MCF 10A (cell line): ENCODE measurements at regions of chr14 and their contacts with region 1.

Region 1: DNA sequence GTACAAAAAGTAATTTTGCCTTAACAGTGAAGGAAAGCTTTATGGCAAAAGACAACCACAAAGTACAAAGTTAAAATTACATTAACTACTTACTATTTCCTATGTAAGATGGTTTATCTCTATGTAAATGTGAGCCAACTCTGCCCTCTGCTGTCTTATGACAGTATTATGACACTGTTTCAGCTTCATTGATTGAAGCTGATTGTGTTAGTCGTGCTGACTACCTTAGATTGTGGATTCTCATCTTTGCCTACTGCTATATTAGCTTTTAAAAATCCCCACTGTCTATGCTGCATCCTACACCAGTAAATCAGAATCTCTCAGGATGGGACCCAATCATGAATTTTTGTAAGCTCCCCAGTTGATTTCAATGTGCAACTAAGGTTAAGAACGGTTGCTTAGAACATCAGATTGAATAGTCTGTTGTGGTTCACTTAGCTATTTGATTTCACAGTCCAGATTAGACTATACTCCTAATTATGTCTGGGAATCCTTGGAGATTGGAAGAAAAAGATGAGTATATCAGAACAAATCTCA is 12.2 kb upstream of the SPTB start:
- DNase-seq: peak; percentile 71
- H3K4me3 Mint-ChIP-seq: no peak overlapping the region
- H3K27ac Mint-ChIP-seq: no peak overlapping the region
- H3K4me1 Mint-ChIP-seq: no peaks in the 10 kb centered on the region
- H3K27me3 Mint-ChIP-seq: peaks cover 27% of the 10 kb centered on the region
- CTCF ChIP-seq: peak; percentile 63

Region 2: DNA sequence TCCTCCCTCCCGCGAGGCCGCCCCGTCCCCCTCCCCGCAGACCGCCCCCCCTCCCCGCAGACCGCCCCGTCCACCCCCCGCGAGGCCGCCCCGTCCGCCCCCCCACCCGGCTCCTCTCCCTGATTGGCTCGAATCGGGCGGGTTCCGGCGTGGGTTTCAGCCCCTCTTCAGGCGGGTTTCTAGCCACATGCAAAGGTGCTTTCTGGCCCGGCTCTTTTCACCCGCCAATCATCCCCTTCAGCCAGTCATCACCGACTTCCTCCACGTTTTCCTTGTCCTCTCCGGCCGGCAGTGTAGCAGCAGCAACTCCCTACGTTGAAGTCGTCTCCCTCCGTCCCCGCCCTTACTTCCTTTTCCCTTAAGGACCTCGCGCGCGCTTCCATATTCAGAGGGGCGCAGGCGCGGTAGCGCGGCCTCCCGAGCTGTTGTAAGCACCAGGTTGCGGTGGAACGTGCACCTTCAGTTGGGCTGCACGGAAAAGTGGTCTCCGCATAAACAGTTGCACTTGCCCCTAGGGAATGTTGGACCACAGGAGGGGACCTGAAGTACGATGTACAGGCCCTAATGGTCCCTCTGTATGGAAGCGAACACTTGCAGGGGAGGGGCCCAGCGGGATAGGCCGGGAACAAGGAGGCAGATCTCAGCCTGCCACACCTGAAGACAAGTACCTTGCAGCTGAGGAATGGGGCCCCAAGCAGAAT is 553.1 kb before region 1 on chr14:
- CTCF ChIA-PET with region 1: interaction called, 13 read pairs
- POLR2A ChIA-PET with region 1: no interaction called
- intact Hi-C with region 1: loop called (anchors 5 kb)
- DNase-seq: peak; percentile 99
- H3K4me3 Mint-ChIP-seq: peak overlapping the region; percentile 94
- H3K27ac Mint-ChIP-seq: peak overlapping the region; percentile 83
- H3K4me1 Mint-ChIP-seq: peaks cover 6% of the 10 kb centered on the region
- H3K27me3 Mint-ChIP-seq: no peaks in the 10 kb centered on the region
- CTCF ChIP-seq: no peak

Region 3: GRCh38 chr14:64772393-64772950 is 119.4 kb before region 1 on chr14:
- CTCF ChIA-PET with region 1: interaction called, 18 read pairs
- POLR2A ChIA-PET with region 1: no interaction called
- intact Hi-C with region 1: no loop called
- DNase-seq: no peak
- H3K4me3 Mint-ChIP-seq: no peak overlapping the region
- H3K27ac Mint-ChIP-seq: no peak overlapping the region
- H3K4me1 Mint-ChIP-seq: peaks cover 5% of the 10 kb centered on the region
- H3K27me3 Mint-ChIP-seq: no peaks in the 10 kb centered on the region
- CTCF ChIP-seq: no peak

Region 4: DNA sequence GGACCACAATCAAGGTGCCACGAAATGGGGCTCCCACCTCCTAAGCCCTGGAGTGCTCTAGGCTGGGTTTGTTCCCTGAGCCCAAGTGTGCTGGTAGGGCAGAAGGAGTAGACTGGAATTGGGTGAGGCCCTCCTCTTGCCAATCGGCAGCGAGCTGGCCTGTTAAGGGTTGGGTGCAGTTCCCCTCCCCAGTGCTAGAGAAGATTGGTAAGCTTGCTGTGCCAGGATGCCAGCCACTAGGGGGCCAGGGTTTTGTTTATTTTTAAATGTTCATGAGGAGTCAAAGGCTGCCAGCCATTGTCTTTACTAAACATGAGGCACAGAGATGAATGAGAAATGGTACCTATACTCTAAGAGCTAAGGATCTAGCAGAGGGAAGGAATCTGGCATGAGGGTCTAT is 91.9 kb before region 1 on chr14:
- CTCF ChIA-PET with region 1: interaction called, 42 read pairs
- POLR2A ChIA-PET with region 1: no interaction called
- intact Hi-C with region 1: loop called (anchors 5 kb)
- DNase-seq: peak; percentile 64
- H3K4me3 Mint-ChIP-seq: no peak overlapping the region
- H3K27ac Mint-ChIP-seq: no peak overlapping the region
- H3K4me1 Mint-ChIP-seq: peaks cover 6% of the 10 kb centered on the region
- H3K27me3 Mint-ChIP-seq: no peaks in the 10 kb centered on the region
- CTCF ChIP-seq: peak; percentile 49

Region 5: GRCh38 chr14:64848239-64848638 is 43.7 kb before region 1 on chr14:
- CTCF ChIA-PET with region 1: interaction called, 20 read pairs
- POLR2A ChIA-PET with region 1: no interaction called
- intact Hi-C with region 1: no loop called
- DNase-seq: no peak
- H3K4me3 Mint-ChIP-seq: no peak overlapping the region
- H3K27ac Mint-ChIP-seq: no peak overlapping the region
- H3K4me1 Mint-ChIP-seq: no peaks in the 10 kb centered on the region
- H3K27me3 Mint-ChIP-seq: peaks cover 93% of the 10 kb centered on the region
- CTCF ChIP-seq: no peak

Region 6: GRCh38 chr14:64914237-64914971 is 22.5 kb after region 1 on chr14 and contains the start of gene CHURC1:
- CTCF ChIA-PET with region 1: interaction called, 14 read pairs
- POLR2A ChIA-PET with region 1: interaction called, 4 read pairs
- intact Hi-C with region 1: no loop called
- DNase-seq: peak; percentile 99
- H3K4me3 Mint-ChIP-seq: peak within 1 kb of the TSS; percentile 85
- H3K27ac Mint-ChIP-seq: peak within 1 kb of the TSS; percentile 98
- H3K4me1 Mint-ChIP-seq: peaks cover 25% of the 10 kb centered on the region
- H3K27me3 Mint-ChIP-seq: no peaks in the 10 kb centered on the region
- CTCF ChIP-seq: no peak
- total RNA-seq, gene CHURC1: 72.5 and 89.2 TPM in 2 replicates

Region 7: DNA sequence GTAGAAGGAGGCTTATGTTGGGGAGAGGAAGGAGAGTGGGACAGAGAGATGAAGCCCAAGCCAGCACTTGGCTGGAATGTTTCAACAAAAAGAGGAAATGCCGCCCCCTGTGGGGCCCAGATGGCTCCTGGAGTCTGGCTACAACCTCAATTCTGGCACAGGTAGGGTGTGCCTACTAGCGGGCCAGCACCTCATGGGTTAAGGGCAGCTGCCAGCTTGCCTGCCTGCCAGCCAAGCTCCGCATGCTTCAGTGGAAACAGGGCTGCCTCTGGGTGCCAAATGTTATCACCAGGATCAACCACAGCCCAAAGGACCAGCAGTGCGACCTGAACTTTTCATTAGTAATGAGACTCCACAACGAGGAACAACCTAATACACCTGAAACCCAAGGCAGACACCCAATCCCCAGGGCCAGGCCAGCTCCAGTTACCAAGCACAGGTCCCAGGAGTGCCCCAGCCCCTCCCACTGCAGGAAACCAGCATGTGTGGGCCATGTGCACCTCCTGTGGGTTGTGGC is 68.9 kb after region 1 on chr14:
- CTCF ChIA-PET with region 1: no interaction called
- POLR2A ChIA-PET with region 1: no interaction called
- intact Hi-C with region 1: no loop called
- DNase-seq: no peak
- H3K4me3 Mint-ChIP-seq: no peak overlapping the region
- H3K27ac Mint-ChIP-seq: no peak overlapping the region
- H3K4me1 Mint-ChIP-seq: no peaks in the 10 kb centered on the region
- H3K27me3 Mint-ChIP-seq: no peaks in the 10 kb centered on the region
- CTCF ChIP-seq: no peak

Region 8: GRCh38 chr14:65015391-65015790 is 123.5 kb after region 1 on chr14:
- CTCF ChIA-PET with region 1: no interaction called
- POLR2A ChIA-PET with region 1: no interaction called
- intact Hi-C with region 1: no loop called
- DNase-seq: no peak
- H3K4me3 Mint-ChIP-seq: no peak overlapping the region
- H3K27ac Mint-ChIP-seq: no peak overlapping the region
- H3K4me1 Mint-ChIP-seq: no peaks in the 10 kb centered on the region
- H3K27me3 Mint-ChIP-seq: no peaks in the 10 kb centered on the region
- CTCF ChIP-seq: no peak

Region 9: DNA sequence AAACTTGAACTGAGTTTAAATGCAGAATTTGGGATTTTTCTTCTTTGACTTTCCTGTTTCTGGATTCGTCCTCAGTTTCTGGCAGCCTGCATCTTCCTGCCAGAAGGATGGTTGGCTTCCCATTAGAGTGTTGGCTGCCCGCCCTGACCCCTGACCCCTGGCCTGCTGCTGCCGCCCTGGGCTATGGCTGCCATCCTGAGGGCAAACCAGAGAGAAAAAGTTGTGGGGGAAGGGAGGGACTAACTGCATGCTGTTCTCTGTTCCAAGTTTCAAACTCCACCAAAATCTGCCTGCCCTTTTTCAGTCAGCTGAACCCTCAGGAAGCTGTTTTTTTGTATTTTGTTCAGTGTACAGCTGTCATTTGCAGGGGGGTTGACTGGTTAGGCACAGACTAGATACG is 143.1 kb after region 1 on chr14:
- CTCF ChIA-PET with region 1: no interaction called
- POLR2A ChIA-PET with region 1: no interaction called
- intact Hi-C with region 1: no loop called
- DNase-seq: no peak
- H3K4me3 Mint-ChIP-seq: no peak overlapping the region
- H3K27ac Mint-ChIP-seq: no peak overlapping the region
- H3K4me1 Mint-ChIP-seq: peaks cover 5% of the 10 kb centered on the region
- H3K27me3 Mint-ChIP-seq: no peaks in the 10 kb centered on the region
- CTCF ChIP-seq: no peak